Activated CD4-positive, alpha-beta T cell treated with anti-CD3 and anti-CD28 coated beads, Interleukin-2, amount 10 ng/mL, durations not matched to agents 24 days and 14 days (primary cell): ENCODE measurements at regions of chr20 and their contacts with region 1.

Region 1: DNA sequence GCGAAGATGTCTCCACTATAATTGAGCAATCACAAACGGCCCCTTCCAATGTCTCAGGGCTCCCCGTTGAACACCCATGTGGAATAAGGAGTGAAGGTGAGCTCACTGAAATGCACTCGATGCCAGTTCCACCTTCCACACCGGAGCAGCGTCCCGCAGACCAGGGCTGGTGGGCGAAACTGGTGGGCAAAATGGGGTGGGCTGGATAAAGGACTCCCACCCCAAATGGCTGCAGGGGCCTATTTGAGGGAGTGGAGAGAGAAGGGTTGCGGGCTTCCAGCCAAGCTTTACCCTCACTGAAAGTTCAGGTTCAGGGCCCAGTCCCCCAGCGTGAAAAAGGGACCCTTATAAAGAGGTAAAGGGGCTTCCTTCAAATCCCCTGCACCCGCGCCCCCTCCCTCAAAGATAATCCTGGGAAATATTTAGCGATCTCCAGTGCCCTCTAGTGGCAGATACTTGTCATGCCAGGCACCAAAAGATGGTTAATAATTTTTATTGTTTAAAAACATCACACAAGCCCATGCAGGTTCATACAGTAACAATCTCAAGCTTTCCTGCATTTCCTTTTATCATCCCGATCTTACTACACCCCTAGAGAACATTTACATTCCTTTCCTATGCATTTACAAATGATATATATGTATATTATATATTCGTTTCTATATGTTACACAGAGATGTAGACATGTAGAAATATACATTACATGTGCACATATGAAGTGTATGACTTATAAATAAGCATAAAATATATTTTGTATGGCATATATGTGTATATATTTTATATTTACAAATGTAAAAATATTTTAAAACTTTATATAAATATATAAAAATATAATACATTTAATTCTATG is 58.2 kb upstream of the NKX2-2 start:
- DNase-seq: peak; percentile 72
- H3K4me3 Mint-ChIP-seq: no peak overlapping the region
- H3K27ac Mint-ChIP-seq: no peak overlapping the region
- H3K4me1 Mint-ChIP-seq: peaks cover 4% of the 10 kb centered on the region
- H3K27me3 Mint-ChIP-seq: peaks cover 23% of the 10 kb centered on the region

Region 2: DNA sequence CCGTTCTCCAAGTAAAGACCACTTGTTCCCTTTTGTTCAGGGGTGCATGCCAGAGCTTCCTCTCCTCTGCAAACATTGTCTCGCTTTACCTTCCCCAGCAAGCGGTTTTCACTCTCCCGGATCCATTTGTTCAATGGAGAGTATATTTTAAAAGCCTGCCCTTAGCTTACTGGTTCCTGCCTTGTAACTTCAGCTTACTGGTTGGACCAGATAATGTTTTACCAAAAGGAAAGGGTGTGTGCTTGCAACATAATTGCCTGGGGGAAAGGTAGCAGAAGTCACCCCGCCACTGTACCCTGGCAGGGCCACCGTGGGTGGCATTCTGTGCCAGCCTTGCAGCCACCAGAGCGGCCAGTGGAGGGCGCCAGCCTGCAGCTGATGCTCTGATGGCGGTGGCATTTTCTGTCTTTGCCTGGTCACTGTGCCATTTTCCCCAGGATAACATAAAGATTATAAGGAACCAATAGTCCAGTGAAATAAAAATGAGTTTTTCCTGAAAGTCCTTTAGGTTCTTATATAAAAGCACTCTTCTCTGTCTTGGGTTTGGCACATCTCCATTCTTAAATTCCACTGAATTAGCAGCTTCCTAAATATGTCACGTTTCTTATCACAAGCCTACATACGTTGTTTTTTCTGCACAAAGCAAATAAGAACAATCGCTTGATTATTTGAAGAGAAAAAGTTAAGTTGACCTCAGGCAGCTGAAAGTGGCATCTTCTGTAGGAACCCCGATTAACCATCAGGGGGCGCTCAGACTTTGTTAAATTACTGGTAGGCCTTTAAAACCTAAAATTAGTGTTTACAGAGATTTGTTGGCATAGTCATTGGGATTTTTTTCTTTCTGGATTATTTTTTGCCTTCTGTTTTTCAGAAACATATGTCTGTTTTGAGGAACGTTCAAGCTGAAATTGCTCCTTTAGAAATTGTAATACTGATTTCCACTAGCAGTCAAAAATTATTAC is 336.3 kb before region 1 on chr20:
- intact Hi-C with region 1: loop called (anchors 1 kb)
- DNase-seq: peak; percentile 89
- H3K4me3 Mint-ChIP-seq: no peak overlapping the region
- H3K27ac Mint-ChIP-seq: no peak overlapping the region
- H3K4me1 Mint-ChIP-seq: peaks cover 2% of the 10 kb centered on the region
- H3K27me3 Mint-ChIP-seq: no peaks in the 10 kb centered on the region

Region 3: GRCh38 chr20:21280522-21281016 is 291.5 kb before region 1 on chr20:
- intact Hi-C with region 1: no loop called
- DNase-seq: no peak
- H3K4me3 Mint-ChIP-seq: no peak overlapping the region
- H3K27ac Mint-ChIP-seq: no peak overlapping the region
- H3K4me1 Mint-ChIP-seq: no peaks in the 10 kb centered on the region
- H3K27me3 Mint-ChIP-seq: peaks cover 20% of the 10 kb centered on the region

Region 4: DNA sequence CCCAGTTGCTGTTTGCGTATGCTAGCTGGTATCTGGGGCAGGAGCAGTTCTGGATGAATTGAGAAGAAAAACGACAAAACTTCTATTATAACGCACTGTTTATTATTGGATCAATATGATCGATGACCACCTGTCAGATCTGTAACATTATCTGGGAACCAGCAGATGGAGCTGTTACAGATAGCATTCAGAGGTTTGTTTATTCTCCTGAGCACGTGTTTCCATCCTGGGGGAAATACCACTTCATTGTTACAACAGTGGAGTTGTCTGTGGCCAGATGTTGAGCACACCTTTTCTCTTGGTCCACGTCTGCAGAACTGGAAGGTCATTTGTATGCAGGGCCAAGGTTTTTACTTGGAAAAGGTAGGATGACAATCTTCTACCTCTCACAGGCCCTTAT is 42.2 kb before region 1 on chr20:
- intact Hi-C with region 1: loop called (anchors 1 kb)
- DNase-seq: no peak
- H3K4me3 Mint-ChIP-seq: no peak overlapping the region
- H3K27ac Mint-ChIP-seq: no peak overlapping the region
- H3K4me1 Mint-ChIP-seq: peaks cover 2% of the 10 kb centered on the region
- H3K27me3 Mint-ChIP-seq: peaks cover 60% of the 10 kb centered on the region

Region 5: DNA sequence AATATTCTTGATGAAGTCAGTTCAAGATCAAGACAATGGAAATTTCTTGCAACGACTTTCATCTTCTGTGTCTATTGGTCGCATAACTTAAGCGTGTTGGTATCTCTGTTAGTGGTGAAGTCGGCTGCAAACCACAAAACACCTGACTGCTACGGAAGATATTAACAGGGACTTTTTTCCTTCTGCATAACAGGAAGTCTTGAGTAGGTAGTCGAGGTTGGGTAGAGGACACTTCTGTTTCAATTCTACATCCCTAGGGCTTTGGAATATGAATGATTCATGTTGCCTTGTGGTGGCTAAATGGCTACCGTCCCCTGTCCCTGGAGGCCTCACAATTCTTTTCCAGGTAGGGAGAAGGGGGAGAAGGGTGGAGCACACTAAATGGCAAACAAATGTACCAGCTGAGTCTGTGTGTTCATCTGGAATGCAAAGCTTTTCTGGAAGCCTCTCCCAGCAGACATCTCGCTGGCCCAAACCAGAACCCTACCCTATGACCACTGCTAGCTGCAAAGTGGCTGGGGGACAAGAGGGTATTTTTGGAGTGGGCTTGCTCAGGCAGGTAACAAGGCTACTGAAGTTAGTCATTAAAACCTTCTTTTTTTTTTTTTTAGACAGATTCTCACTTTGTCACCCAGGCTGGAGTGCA is 23.6 kb before region 1 on chr20:
- intact Hi-C with region 1: loop called (anchors 1 kb)
- DNase-seq: peak; percentile 86
- H3K4me3 Mint-ChIP-seq: peak overlapping the region; percentile 52
- H3K27ac Mint-ChIP-seq: peak overlapping the region; percentile 78
- H3K4me1 Mint-ChIP-seq: peaks cover 22% of the 10 kb centered on the region
- H3K27me3 Mint-ChIP-seq: no peaks in the 10 kb centered on the region

Region 6: DNA sequence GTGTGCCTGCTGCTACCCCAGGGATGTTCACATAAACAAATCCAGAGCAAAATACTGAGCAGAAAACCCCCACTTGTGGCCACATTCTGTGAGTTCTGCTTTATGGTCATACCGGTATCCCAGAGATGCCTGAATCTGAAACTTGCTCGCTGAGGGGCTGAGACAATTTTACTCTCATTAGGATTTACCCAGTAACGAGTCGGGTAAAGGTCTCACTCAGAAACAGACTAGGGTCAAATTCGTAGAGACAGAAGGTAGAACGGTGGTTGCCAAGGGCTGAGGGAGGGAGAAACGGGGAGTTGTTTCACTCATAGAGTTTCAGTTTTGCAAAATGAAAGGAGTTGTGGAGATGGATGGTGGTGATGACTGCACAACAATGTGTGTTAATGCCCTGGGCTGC is 12.8 kb before region 1 on chr20:
- intact Hi-C with region 1: loop called (anchors 2 kb)
- DNase-seq: peak; percentile 75
- H3K4me3 Mint-ChIP-seq: peak overlapping the region; percentile 72
- H3K27ac Mint-ChIP-seq: peak overlapping the region; percentile 67
- H3K4me1 Mint-ChIP-seq: peaks cover 27% of the 10 kb centered on the region
- H3K27me3 Mint-ChIP-seq: peaks cover 10% of the 10 kb centered on the region